ENCODE measurements at regions of chr12 and their contacts with region 1.

Region 1: GRCh38 chr12:50504798-50505385 is at the start of gene DIP2B:
- DNase-seq: peak; percentile 96
- H3K4me3 Mint-ChIP-seq: peak within 1 kb of the TSS; percentile 99
- H3K27ac Mint-ChIP-seq: peak within 1 kb of the TSS; percentile 93
- H3K4me1 Mint-ChIP-seq: peaks cover 42% of the 10 kb centered on the region
- H3K27me3 Mint-ChIP-seq: no peaks in the 10 kb centered on the region
- total RNA-seq, gene DIP2B: 23.3 to 23.7 TPM

Region 2: GRCh38 chr12:50477241-50477832 is 27.6 kb before region 1 on chr12:
- CTCF ChIA-PET with region 1: no interaction called
- POLR2A ChIA-PET with region 1: no interaction called
- intact Hi-C with region 1: no loop called
- DNase-seq: no peak
- H3K4me3 Mint-ChIP-seq: no peak overlapping the region
- H3K27ac Mint-ChIP-seq: peak overlapping the region; percentile 19
- H3K4me1 Mint-ChIP-seq: no peaks in the 10 kb centered on the region
- H3K27me3 Mint-ChIP-seq: no peaks in the 10 kb centered on the region

Region 3: DNA sequence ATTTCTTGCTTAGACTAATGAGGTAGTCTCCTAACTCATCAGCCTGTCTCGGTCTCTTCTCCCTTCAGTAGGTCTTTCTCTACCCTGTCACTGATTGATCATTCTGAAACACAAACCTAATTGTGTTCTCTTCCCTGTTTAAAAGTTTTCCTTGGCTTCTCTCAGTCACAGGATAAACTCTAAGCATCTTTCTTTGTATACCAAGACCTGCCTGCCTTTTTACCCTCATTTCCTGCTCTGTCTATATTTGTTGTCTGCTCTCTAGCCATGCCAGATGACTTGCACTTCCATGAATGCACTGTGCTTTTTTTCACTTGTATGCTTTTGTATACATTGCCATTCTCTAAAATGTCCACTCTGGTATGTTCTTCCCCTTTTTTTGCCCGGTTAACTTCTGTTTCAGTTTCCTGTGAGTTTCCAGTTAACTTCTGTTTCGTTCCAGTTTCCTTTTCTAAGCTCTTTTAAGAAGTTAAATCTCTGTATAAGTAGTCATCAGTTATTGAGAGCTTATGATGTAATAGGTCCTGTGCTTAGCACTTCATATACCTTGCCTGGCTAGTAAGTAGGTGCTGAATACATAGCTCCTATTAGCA is 12.7 kb after region 1 on chr12:
- CTCF ChIA-PET with region 1: interaction called, 12 read pairs
- POLR2A ChIA-PET with region 1: interaction called, 5 read pairs
- intact Hi-C with region 1: no loop called
- DNase-seq: no peak
- H3K4me3 Mint-ChIP-seq: no peak overlapping the region
- H3K27ac Mint-ChIP-seq: no peak overlapping the region
- H3K4me1 Mint-ChIP-seq: peaks cover 53% of the 10 kb centered on the region
- H3K27me3 Mint-ChIP-seq: no peaks in the 10 kb centered on the region

Region 4: GRCh38 chr12:50533203-50533584 is 28.3 kb after region 1 on chr12:
- CTCF ChIA-PET with region 1: interaction called, 8 read pairs
- POLR2A ChIA-PET with region 1: interaction called, 16 read pairs
- intact Hi-C with region 1: loop called (anchors 1 kb)
- DNase-seq: no peak
- H3K4me3 Mint-ChIP-seq: no peak overlapping the region
- H3K27ac Mint-ChIP-seq: no peak overlapping the region
- H3K4me1 Mint-ChIP-seq: peaks cover 38% of the 10 kb centered on the region
- H3K27me3 Mint-ChIP-seq: no peaks in the 10 kb centered on the region

Region 5: GRCh38 chr12:50542448-50542847 is 37.6 kb after region 1 on chr12:
- CTCF ChIA-PET with region 1: interaction called, 13 read pairs
- POLR2A ChIA-PET with region 1: interaction called, 8 read pairs
- intact Hi-C with region 1: loop called (anchors 1 kb)
- DNase-seq: peak; percentile 41
- H3K4me3 Mint-ChIP-seq: no peak overlapping the region
- H3K27ac Mint-ChIP-seq: peak overlapping the region; percentile 87
- H3K4me1 Mint-ChIP-seq: peaks cover 48% of the 10 kb centered on the region
- H3K27me3 Mint-ChIP-seq: no peaks in the 10 kb centered on the region

Region 6: DNA sequence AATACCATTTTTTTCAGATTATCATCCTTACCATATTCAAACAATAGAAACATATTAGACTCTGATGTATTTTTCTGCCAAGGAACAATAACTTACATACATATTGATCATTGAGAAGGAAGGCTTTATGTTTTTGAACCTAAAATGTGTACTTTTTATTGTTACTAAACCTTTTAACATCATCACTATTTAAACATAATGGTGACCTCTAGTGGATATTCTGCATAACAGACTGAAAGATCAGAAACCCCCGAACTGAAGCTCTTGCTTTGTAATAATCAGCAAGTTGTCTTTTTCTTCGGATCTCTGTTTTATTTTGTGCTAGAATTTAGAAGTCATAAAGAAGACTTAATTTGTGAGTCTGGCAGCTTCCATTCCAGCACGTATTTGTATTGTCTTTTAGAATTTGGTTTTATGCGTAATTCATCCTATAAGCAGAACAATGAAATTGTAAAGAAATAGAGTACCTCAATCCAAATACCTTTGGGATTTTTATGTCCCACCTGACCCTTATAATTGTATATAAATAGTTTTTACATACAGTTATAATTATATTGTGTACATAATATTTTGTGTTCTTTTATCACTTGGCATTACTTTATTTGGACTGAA is 133.1 kb after region 1 on chr12:
- CTCF ChIA-PET with region 1: interaction called, 147 read pairs
- POLR2A ChIA-PET with region 1: interaction called, 5 read pairs
- intact Hi-C with region 1: loop called (anchors 1 kb)
- DNase-seq: no peak
- H3K4me3 Mint-ChIP-seq: no peak overlapping the region
- H3K27ac Mint-ChIP-seq: peak overlapping the region; percentile 71
- H3K4me1 Mint-ChIP-seq: peaks cover 41% of the 10 kb centered on the region
- H3K27me3 Mint-ChIP-seq: no peaks in the 10 kb centered on the region

Measured in activated CD4-positive, alpha-beta memory T cell treated with anti-CD3 and anti-CD28 coated beads for 36 hours (primary cell).